ENCODE measurements at regions of chr6 and their contacts with region 1.

Region 1: GRCh38 chr6:108526739-108527174 is 34.0 kb upstream of the FOXO3 start:
- DNase-seq: no peak
- H3K4me3 ChIP-seq: no peak overlapping the region
- CTCF ChIP-seq: peak; percentile 62

Region 2: DNA sequence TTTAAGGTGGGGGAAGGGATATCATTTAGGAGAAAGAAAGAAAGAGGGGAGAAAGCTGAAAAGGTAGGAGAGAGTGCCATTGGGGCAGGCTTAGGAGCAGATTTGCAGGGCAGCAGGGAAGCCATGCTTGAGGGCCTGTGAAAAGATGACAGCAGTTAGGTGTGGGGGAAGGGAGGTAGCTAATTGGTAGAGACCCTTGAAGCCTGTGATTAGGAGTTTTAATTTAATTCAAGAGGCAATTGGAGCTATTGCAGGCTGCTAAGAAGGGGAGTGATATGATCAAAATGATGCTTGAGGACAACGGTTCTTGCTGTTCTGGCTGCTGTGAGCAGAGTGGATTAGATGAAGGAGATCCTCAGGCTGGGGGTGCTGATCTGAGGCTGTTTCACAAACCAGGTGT is 544.3 kb before region 1 on chr6:
- CTCF ChIA-PET with region 1: interaction called, 27 read pairs
- POLR2A ChIA-PET with region 1: no interaction called
- DNase-seq: no peak
- H3K4me3 ChIP-seq: no peak overlapping the region
- CTCF ChIP-seq: no peak

Region 3: GRCh38 chr6:108113557-108114519 is 412.9 kb before region 1 on chr6:
- CTCF ChIA-PET with region 1: interaction called, 110 read pairs
- POLR2A ChIA-PET with region 1: no interaction called
- DNase-seq: no peak
- H3K4me3 ChIP-seq: peak overlapping the region; percentile 45
- CTCF ChIP-seq: peak; percentile 32

Region 4: GRCh38 chr6:108510461-108511319 is 16.1 kb before region 1 on chr6:
- CTCF ChIA-PET with region 1: interaction called, 11 read pairs
- POLR2A ChIA-PET with region 1: no interaction called
- DNase-seq: no peak
- H3K4me3 ChIP-seq: no peak overlapping the region
- CTCF ChIP-seq: no peak